Activated naive CD4-positive, alpha-beta T cell treated with anti-CD3 and anti-CD28 coated beads, Interleukin-2, amount 10 ng/mL, durations not matched to agents 7 days and 5 days (primary cell): ENCODE measurements at regions of chr20 and their contacts with region 1.

Region 1: GRCh38 chr20:36808317-36809257 is 35.0 kb upstream of the DSN1 start:
- DNase-seq: peak; percentile 84
- H3K4me3 Mint-ChIP-seq: no peak overlapping the region
- H3K27ac Mint-ChIP-seq: peak overlapping the region; percentile 54
- H3K4me1 Mint-ChIP-seq: peaks cover 7% of the 10 kb centered on the region
- H3K27me3 Mint-ChIP-seq: peaks cover 3% of the 10 kb centered on the region

Region 2: GRCh38 chr20:36792422-36792821 is 16.2 kb before region 1 on chr20:
- CTCF ChIA-PET with region 1: interaction called, 35 read pairs
- DNase-seq: peak; percentile 36
- H3K4me3 Mint-ChIP-seq: no peak overlapping the region
- H3K27ac Mint-ChIP-seq: no peak overlapping the region
- H3K4me1 Mint-ChIP-seq: no peaks in the 10 kb centered on the region
- H3K27me3 Mint-ChIP-seq: peaks cover 10% of the 10 kb centered on the region

Region 3: DNA sequence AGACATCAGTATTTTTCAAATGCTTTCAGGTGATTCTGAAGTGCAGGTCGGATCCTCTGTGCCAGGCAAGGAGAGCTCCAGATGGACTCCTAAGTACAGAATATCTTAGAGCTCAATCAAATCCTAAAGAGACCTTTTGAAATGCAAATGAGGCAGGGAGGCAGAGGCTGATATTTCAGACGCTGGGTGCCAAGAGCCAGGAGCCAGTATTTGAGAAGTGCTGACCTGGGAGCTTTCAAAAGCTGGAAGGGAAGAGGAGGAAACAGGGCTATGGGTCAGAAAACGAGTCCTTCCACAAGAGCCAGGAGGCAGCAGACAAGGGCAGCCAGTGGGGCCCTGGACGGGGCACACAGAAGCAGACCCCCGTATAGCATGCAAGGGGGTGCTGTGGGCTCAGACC is 11.1 kb after region 1 on chr20:
- CTCF ChIA-PET with region 1: interaction called, 25 read pairs
- DNase-seq: no peak
- H3K4me3 Mint-ChIP-seq: no peak overlapping the region
- H3K27ac Mint-ChIP-seq: no peak overlapping the region
- H3K4me1 Mint-ChIP-seq: no peaks in the 10 kb centered on the region
- H3K27me3 Mint-ChIP-seq: peaks cover 25% of the 10 kb centered on the region

Region 4: DNA sequence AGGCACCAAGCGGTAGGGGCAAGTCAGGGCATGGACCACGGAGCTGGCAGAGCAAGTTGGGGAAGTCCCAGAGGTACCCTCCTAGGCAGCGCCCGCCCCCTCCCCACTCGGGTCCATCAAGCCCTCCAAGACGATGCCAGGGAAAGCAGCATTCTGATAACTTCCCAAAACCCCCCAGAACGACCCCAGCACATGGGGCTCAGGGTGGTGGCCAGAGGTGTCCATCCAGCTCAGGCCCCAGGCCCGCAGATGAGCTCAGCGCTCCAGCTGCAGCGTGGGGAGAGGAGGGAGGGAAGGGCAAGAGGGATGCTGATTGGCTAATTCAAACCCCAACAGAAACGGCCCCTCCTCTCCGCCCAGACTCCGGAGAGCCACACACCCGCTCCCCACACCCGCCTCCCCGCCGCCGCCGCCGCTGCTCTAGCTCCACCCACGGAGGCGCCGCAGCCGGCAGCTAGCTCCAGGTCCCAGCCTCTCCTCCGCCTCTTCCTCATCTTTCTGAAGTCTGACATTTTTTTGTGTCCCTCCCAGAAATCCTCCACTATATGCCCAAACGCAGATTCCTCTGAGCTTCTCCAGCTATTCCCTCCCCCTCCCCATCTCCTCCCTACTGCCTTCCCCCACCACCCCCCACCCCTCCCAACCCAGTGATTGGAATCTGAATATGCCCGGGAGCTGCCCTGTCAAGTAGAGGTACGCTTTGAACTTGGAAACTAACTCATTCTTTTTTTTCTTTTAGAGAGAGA is 27.0 kb after region 1 on chr20:
- CTCF ChIA-PET with region 1: interaction called, 20 read pairs
- DNase-seq: peak; percentile 94
- H3K4me3 Mint-ChIP-seq: peak overlapping the region; percentile 78
- H3K27ac Mint-ChIP-seq: peak overlapping the region; percentile 85
- H3K4me1 Mint-ChIP-seq: peaks cover 33% of the 10 kb centered on the region
- H3K27me3 Mint-ChIP-seq: no peaks in the 10 kb centered on the region

Region 5: GRCh38 chr20:36886859-36887751 is 78.5 kb after region 1 on chr20:
- CTCF ChIA-PET with region 1: interaction called, 14 read pairs
- DNase-seq: peak; percentile 87
- H3K4me3 Mint-ChIP-seq: no peak overlapping the region
- H3K27ac Mint-ChIP-seq: peak overlapping the region; percentile 22
- H3K4me1 Mint-ChIP-seq: peaks cover 6% of the 10 kb centered on the region
- H3K27me3 Mint-ChIP-seq: no peaks in the 10 kb centered on the region